CD4-positive, alpha-beta T cell (primary cell): ENCODE measurements at regions of chr9 and their contacts with region 1.

Region 1: DNA sequence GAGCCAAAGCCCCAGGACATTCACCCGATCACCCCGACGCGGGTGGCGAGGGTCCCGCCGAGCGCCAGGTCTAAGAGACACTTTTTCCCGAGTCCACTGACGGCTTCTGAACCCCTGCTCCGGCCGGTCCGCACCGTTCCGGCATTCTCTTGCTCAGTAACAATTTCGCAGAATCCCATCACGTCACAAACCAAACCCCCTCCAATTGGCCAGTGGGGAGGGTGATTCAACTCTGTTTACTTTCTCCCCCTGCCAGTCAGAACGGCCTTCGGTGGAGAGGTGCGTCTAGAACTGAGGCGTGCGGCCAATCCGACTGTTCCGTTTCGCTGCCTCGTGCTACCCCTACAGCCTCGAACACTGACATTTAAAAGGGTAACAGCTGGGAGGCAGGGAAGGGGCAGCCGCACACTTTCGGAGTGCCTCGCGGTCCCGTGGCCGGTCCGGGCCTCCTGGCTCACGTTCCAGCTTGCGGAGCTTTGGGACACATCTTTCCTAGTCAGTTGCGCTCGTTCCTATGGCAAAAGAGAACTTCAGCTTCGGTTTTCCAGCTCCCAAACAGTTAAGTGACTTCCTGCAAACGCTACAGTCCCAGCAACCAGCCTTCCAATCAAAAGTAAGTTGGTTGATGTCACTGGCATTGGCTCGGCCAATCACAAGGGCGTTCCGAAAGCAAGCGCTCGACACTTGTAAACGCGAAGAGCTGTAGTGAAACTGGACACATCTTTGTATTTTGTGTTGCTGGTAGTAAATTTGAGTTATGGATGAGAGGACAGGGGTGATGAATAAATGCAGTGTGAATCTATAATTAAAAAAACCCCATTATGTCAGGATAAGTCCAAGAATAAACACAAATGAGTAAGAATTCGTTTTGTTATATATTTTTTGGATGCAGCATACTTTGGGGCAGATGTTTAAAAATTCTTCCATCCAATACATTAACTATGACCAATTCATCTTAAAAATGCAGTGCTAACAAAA is at the start of gene KLF9:
- DNase-seq: peak; percentile 81 to 98 (median 86)
- ATAC-seq: peak; percentile 80
- H3K4me3 ChIP-seq: peak within 1 kb of the TSS; percentile 93
- H3K4me3 Mint-ChIP-seq: peak within 1 kb of the TSS; percentile 98
- H3K27ac ChIP-seq: peak within 1 kb of the TSS; percentile 97 to 99
- H3K27ac Mint-ChIP-seq: peak within 1 kb of the TSS; percentile 100
- H3K4me1 ChIP-seq: peaks cover 46% of the 10 kb centered on the region
- H3K4me1 Mint-ChIP-seq: peaks cover 60% of the 10 kb centered on the region
- H3K27me3 ChIP-seq: no peaks in the 10 kb centered on the region
- H3K27me3 Mint-ChIP-seq: no peaks in the 10 kb centered on the region
- CTCF ChIP-seq: no peak
- total RNA-seq, gene KLF9: 132 to 135 TPM

Region 2: DNA sequence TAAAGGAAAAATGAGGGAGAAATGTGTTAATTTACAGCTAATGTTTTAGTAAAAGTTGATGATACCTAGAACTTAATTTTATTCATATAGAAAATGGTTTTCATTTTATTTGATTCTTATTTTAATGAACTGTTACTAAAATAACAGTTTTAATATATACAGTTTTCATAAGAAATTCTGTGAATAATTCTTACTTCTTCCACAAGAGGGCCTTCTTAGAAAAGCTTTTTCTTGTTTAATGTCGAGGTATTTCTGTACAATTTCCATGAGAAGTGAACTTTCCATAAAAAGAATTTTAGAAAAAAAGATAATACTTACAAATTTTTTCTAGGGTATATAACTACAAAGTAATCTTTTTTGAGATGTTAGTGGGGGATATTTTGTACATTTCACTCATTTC is 73.5 kb before region 1 on chr9:
- CTCF ChIA-PET with region 1: no interaction called
- POLR2A ChIA-PET with region 1: interaction called, 13 read pairs
- intact Hi-C with region 1: no loop called
- DNase-seq: peak in 3 of 14 experiments; percentile 38 to 52 (median 42)
- ATAC-seq: no peak
- H3K4me3 ChIP-seq: no peak overlapping the region
- H3K4me3 Mint-ChIP-seq: no peak overlapping the region
- H3K27ac ChIP-seq: no peak overlapping the region
- H3K27ac Mint-ChIP-seq: no peak overlapping the region
- H3K4me1 ChIP-seq: no peaks in the 10 kb centered on the region
- H3K4me1 Mint-ChIP-seq: peaks cover 7% of the 10 kb centered on the region
- H3K27me3 ChIP-seq: no peaks in the 10 kb centered on the region
- H3K27me3 Mint-ChIP-seq: no peaks in the 10 kb centered on the region
- CTCF ChIP-seq: peak; percentile 66

Region 3: GRCh38 chr9:70392189-70392588 is 21.9 kb before region 1 on chr9:
- CTCF ChIA-PET with region 1: interaction called, 3 read pairs
- POLR2A ChIA-PET with region 1: interaction called, 28 read pairs
- intact Hi-C with region 1: loop called in 1 of 2 experiments (anchors 2 kb)
- DNase-seq: peak in 3 of 14 experiments; percentile 24 to 29 (median 28)
- ATAC-seq: peak; percentile 51
- H3K4me3 ChIP-seq: no peak overlapping the region
- H3K4me3 Mint-ChIP-seq: peak overlapping the region; percentile 23
- H3K27ac ChIP-seq: no peak overlapping the region
- H3K27ac Mint-ChIP-seq: no peak overlapping the region
- H3K4me1 ChIP-seq: peaks cover 57% of the 10 kb centered on the region
- H3K4me1 Mint-ChIP-seq: peaks cover 88% of the 10 kb centered on the region
- H3K27me3 ChIP-seq: no peaks in the 10 kb centered on the region
- H3K27me3 Mint-ChIP-seq: no peaks in the 10 kb centered on the region
- CTCF ChIP-seq: peak; percentile 19

Region 4: DNA sequence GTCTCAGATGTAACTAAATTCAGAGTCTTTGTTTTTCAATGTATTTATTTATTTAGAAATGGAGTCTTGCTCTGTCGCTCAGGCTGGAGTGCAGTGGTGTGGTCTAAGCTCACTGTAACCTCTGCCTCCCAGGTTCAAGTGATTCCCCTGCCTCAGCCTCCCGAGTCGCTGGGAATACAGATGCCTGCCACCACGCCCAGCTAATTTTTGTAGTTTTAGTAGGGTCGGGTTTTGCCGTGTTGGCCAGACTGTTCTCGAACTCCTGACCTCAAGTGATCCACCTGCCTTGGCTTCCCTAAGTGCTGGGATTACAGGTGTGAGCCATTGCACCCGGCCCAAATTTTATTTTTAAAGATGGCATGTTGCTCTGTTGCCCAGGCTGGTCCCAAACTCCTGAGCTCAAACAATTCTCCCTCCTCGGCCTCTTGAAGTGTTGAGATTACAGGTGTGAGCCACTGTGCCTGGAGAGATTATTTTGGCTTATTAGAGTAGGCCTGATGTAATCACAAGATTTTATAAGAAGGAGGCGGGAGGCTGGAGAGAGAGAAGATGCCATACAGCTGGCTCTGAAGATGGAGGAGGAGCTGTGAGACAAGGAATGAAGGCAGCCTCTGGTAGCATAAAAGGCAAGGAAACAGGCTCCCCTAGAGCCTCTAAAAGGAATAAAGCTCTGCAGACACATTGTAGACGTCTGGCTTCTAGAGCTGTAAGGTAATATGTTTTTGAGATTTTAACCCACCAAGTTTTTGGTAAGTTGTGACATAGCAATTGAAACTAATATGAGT is 13.3 kb after region 1 on chr9:
- CTCF ChIA-PET with region 1: interaction called, 3 read pairs
- POLR2A ChIA-PET with region 1: interaction called, 11 read pairs
- intact Hi-C with region 1: loop called in 1 of 2 experiments (anchors 2 kb)
- DNase-seq: no peak
- ATAC-seq: peak; percentile 43
- H3K4me3 ChIP-seq: no peak overlapping the region
- H3K4me3 Mint-ChIP-seq: no peak overlapping the region
- H3K27ac ChIP-seq: no peak overlapping the region
- H3K27ac Mint-ChIP-seq: no peak overlapping the region
- H3K4me1 ChIP-seq: peaks cover 3% of the 10 kb centered on the region
- H3K4me1 Mint-ChIP-seq: peaks cover 13% of the 10 kb centered on the region
- H3K27me3 ChIP-seq: no peaks in the 10 kb centered on the region
- H3K27me3 Mint-ChIP-seq: no peaks in the 10 kb centered on the region
- CTCF ChIP-seq: no peak

Region 5: DNA sequence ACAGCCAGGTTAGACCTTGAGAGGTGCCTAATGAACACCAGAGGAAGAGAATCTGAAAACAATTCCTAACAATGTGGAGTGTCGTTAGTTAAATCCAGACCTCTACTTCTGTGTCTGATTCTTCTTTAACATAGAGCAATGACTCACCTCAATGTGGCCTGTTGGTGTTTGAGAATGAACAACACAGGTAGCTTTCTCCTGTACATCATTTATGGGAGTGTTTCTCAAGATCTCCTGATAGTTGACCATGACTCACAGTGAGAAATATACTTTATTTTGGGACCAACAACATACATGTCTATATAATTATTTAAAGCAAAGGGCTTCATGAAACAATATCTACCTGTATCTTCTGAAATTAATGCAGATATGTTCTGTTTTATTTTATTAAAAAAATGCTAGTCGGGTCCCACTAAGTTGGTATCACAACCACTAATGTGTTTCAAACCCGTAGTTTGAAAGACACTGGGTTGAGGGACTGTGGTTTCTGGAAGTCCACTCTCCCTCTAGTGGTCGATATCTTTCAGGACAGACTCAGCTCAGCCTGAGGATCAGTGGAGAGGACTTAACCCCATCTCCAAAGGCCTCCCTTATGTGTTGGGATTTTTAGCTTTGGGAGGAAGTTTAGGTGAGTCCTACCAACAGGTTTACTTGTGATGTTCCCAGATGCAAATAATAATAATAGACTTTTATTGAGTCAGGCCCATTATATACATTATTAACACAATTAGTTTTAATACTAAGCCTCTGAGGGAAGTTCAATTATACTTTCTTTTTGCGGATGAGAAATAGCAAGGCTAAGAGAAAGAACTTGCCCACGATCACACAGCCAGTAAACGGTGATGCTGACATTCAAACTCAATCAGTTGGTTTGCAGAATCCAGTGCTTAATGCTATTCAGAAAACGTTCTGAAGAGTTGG is 70.4 kb after region 1 on chr9:
- CTCF ChIA-PET with region 1: interaction called, 3 read pairs
- POLR2A ChIA-PET with region 1: interaction called, 16 read pairs
- intact Hi-C with region 1: loop called in 1 of 2 experiments (anchors 2 kb)
- DNase-seq: peak in 5 of 14 experiments; percentile 1 to 75 (median 56)
- ATAC-seq: peak; percentile 62
- H3K4me3 ChIP-seq: no peak overlapping the region
- H3K4me3 Mint-ChIP-seq: no peak overlapping the region
- H3K27ac ChIP-seq: no peak overlapping the region
- H3K27ac Mint-ChIP-seq: no peak overlapping the region
- H3K4me1 ChIP-seq: no peaks in the 10 kb centered on the region
- H3K4me1 Mint-ChIP-seq: peaks cover 12% of the 10 kb centered on the region
- H3K27me3 ChIP-seq: no peaks in the 10 kb centered on the region
- H3K27me3 Mint-ChIP-seq: no peaks in the 10 kb centered on the region
- CTCF ChIP-seq: peak; percentile 77

Region 6: GRCh38 chr9:70510157-70510770 is 96.2 kb after region 1 on chr9:
- CTCF ChIA-PET with region 1: no interaction called
- POLR2A ChIA-PET with region 1: no interaction called
- intact Hi-C with region 1: no loop called
- DNase-seq: peak in 5 of 14 experiments; percentile 5 to 32 (median 21)
- ATAC-seq: no peak
- H3K4me3 ChIP-seq: no peak overlapping the region
- H3K4me3 Mint-ChIP-seq: no peak overlapping the region
- H3K27ac ChIP-seq: no peak overlapping the region
- H3K27ac Mint-ChIP-seq: no peak overlapping the region
- H3K4me1 ChIP-seq: no peaks in the 10 kb centered on the region
- H3K4me1 Mint-ChIP-seq: peaks cover 6% of the 10 kb centered on the region
- H3K27me3 ChIP-seq: peaks cover 0 to 2% of the 10 kb centered on the region in 2 experiments
- H3K27me3 Mint-ChIP-seq: no peaks in the 10 kb centered on the region
- CTCF ChIP-seq: no peak

Region 7: GRCh38 chr9:70602321-70603019 is 188.4 kb after region 1 on chr9:
- CTCF ChIA-PET with region 1: interaction called, 5 read pairs
- POLR2A ChIA-PET with region 1: interaction called, 50 read pairs
- intact Hi-C with region 1: loop called (anchors 5 to 10 kb)
- DNase-seq: peak; percentile 8 to 77 (median 28)
- ATAC-seq: peak; percentile 70
- H3K4me3 ChIP-seq: no peak overlapping the region
- H3K4me3 Mint-ChIP-seq: no peak overlapping the region
- H3K27ac ChIP-seq: no peak overlapping the region
- H3K27ac Mint-ChIP-seq: no peak overlapping the region
- H3K4me1 ChIP-seq: peaks cover 4% of the 10 kb centered on the region
- H3K4me1 Mint-ChIP-seq: peaks cover 5% of the 10 kb centered on the region
- H3K27me3 ChIP-seq: no peaks in the 10 kb centered on the region
- H3K27me3 Mint-ChIP-seq: no peaks in the 10 kb centered on the region
- CTCF ChIP-seq: peak; percentile 88